ENCODE measurements at regions of chr19 and their contacts with region 1.

Region 1: DNA sequence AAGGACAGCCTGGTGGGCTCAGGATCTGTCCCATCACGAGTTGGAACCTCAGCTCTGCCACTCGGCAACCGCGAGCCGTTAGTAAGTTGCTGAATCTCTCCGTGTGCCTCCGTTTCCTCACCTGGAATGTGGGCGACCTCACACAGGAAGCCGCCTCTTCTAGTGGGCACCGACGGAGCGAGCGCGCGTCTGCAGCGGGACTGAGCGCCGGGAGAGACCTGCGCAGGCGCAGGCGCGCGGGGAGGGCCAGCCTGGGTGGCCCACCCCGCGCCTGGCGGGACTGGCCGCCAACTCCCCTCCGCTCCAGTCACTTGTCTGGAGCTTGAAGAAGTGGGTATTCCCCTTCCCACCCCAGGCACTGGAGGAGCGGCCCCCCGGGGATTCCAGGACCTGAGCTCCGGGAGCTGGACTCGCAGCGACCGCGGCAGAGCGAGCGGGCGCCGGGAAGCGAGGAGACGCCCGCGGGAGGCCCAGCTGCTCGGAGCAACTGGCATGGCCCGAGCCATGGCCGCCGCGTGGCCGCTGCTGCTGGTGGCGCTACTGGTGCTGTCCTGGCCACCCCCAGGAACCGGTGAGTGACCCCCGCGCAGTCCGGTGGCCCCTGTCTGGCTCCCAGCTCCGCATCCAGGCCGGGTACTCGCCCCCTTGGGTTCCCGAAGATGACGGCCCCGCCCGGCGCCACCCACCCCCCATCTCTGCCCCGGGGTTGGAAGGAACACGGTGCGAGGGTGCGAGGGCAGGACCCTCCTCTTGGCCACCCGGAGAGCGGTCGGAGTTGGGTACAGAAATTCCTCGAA is at the start of gene PVR:
- DNase-seq: peak; percentile 25
- ATAC-seq: peak; percentile 97
- H3K4me3 ChIP-seq: peak within 1 kb of the TSS; percentile 61 to 86
- H3K27ac ChIP-seq: peak within 1 kb of the TSS; percentile 74
- H3K4me1 ChIP-seq: no peaks in the 10 kb centered on the region
- H3K27me3 ChIP-seq: no peaks in the 10 kb centered on the region
- CTCF ChIP-seq: no peak
- total RNA-seq, gene PVR: 47.7 TPM

Region 2: GRCh38 chr19:44356383-44357111 is 287.3 kb before region 1 on chr19 and contains the start of gene ZNF112:
- CTCF ChIA-PET with region 1: no interaction called
- POLR2A ChIA-PET with region 1: no interaction called
- in situ Hi-C with region 1: no loop called
- intact Hi-C with region 1: no loop called
- DNase-seq: peak; percentile 69
- ATAC-seq: peak; percentile 100
- H3K4me3 ChIP-seq: peak within 1 kb of the TSS; percentile 63 to 80
- H3K27ac ChIP-seq: peak within 1 kb of the TSS; percentile 74
- H3K4me1 ChIP-seq: no peaks in the 10 kb centered on the region
- H3K27me3 ChIP-seq: no peaks in the 10 kb centered on the region
- CTCF ChIP-seq: no peak
- total RNA-seq, gene ZNF112: 4.3 TPM

Region 3: GRCh38 chr19:44729516-44730033 is 85.8 kb after region 1 on chr19:
- CTCF ChIA-PET with region 1: no interaction called
- POLR2A ChIA-PET with region 1: interaction called, 18 read pairs
- in situ Hi-C with region 1: no loop called
- intact Hi-C with region 1: no loop called
- DNase-seq: no peak
- ATAC-seq: no peak
- H3K4me3 ChIP-seq: no peak overlapping the region
- H3K27ac ChIP-seq: no peak overlapping the region
- H3K4me1 ChIP-seq: peaks cover 14% of the 10 kb centered on the region
- H3K27me3 ChIP-seq: no peaks in the 10 kb centered on the region
- CTCF ChIP-seq: no peak

Region 4: DNA sequence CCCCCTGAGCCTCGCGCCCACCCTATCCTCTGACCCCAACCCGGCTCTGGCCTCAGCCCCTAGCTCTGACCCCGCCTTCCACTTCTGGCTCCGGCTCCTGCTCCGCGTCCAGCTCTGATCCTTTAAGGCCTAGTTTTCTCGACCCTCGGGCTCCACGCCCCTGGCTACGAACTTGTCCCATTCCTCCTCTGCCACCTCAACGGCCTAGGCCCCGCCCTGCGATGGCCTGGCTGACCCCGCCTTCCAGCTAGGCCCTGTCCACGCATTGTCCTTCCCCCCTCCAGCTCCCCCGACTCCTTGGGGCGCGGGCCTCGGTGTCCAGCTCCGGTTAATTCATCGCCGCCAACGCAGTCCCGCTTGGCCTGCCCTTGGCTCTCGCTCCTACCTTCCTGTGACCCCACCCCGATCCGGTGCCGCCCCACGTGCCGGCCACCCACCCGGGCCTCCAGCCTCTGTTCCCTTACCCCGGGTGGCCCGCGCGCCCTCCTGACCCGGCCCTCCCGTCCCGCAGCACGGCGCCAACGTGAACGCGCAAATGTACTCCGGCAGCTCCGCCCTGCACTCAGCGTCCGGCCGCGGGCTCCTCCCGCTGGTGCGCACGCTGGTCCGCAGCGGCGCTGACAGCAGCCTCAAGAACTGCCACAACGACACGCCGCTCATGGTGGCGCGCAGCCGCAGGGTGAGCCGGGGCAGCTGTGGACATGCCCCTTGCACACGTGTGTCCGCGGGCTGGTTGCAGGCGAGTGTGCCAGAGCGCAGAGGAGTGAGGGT is 114.1 kb after region 1 on chr19:
- CTCF ChIA-PET with region 1: no interaction called
- POLR2A ChIA-PET with region 1: interaction called, 13 read pairs
- in situ Hi-C with region 1: no loop called
- intact Hi-C with region 1: no loop called
- DNase-seq: no peak
- ATAC-seq: no peak
- H3K4me3 ChIP-seq: no peak overlapping the region
- H3K27ac ChIP-seq: no peak overlapping the region
- H3K4me1 ChIP-seq: peaks cover 30% of the 10 kb centered on the region
- H3K27me3 ChIP-seq: no peaks in the 10 kb centered on the region
- CTCF ChIP-seq: no peak

Region 5: GRCh38 chr19:44770550-44771257 is 126.9 kb after region 1 on chr19:
- CTCF ChIA-PET with region 1: no interaction called
- POLR2A ChIA-PET with region 1: no interaction called
- in situ Hi-C with region 1: no loop called
- intact Hi-C with region 1: no loop called
- DNase-seq: peak; percentile 84
- ATAC-seq: peak; percentile 98
- H3K4me3 ChIP-seq: no peak overlapping the region
- H3K27ac ChIP-seq: peak overlapping the region; percentile 66
- H3K4me1 ChIP-seq: peaks cover 10% of the 10 kb centered on the region
- H3K27me3 ChIP-seq: no peaks in the 10 kb centered on the region
- CTCF ChIP-seq: peak; percentile 75; the same call in 1 of the 2 replicates